ENCODE measurements at regions of chr6 and their contacts with region 1.

Region 1: DNA sequence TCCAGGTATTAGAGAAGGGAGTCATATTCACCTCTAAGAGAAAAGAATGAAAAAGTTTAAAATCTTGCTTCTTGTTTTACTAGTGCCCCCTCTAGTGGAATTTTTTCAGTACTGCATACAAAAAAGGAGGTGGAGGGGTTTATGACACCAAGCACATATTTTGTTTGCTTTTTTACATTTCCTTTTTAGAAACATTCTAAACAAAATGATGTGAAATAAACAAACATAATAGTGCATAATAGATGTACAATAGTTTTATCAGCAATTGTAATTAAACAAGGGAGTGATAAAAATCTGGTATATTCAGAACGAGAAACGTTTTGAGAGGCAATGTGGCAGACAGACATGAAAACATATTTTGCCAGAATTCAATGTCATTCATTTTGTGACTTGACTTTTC is 111.0 kb upstream of the TFAP2D start:
- DNase-seq: no peak
- ATAC-seq: no peak
- H3K4me3 Mint-ChIP-seq: no peak overlapping the region
- H3K27ac Mint-ChIP-seq: no peak overlapping the region
- H3K4me1 Mint-ChIP-seq: no peaks in the 10 kb centered on the region
- H3K27me3 Mint-ChIP-seq: no peaks in the 10 kb centered on the region
- CTCF ChIP-seq: peak; percentile 79

Region 2: DNA sequence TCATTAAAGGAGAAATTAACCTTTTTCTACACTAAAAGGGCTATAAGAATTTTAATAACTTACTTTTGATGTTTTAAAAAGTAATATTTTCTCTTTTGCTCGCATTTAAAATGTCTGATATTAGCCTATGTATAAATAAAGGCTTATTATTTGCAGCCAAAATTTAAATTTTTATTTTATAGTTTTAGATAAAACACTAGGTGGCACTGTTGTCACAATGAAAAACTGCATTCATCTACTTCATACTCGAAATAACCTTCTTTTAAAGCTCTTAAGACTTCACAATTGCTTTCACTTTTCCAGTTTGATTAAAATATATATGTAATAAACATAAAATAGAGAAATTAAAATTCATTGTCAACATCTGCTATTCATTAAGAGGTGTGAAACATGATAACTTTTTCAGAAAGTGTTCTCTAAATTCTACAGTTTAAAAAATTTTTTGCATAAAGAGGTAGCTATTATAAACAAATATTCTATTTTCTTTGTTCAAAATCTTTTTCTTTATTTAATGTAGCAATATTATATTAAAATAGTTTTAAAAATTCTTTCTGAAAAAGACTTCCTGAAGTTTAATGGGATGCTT is 473.8 kb before region 1 on chr6:
- CTCF ChIA-PET with region 1: interaction called, 3 read pairs
- POLR2A ChIA-PET with region 1: no interaction called
- intact Hi-C with region 1: loop called (anchors 5 kb)
- DNase-seq: no peak
- ATAC-seq: no peak
- H3K4me3 Mint-ChIP-seq: no peak overlapping the region
- H3K27ac Mint-ChIP-seq: no peak overlapping the region
- H3K4me1 Mint-ChIP-seq: no peaks in the 10 kb centered on the region
- H3K27me3 Mint-ChIP-seq: no peaks in the 10 kb centered on the region
- CTCF ChIP-seq: peak; percentile 72

Measured in activated CD8-positive, alpha-beta T cell treated with anti-CD3 and anti-CD28 coated beads for 36 hours (primary cell).